Activated B cell treated with CpG ODN at 0.5 μM for 24 hours (primary cell): ENCODE measurements at regions of chr1 and their contacts with region 1.

Region 1: DNA sequence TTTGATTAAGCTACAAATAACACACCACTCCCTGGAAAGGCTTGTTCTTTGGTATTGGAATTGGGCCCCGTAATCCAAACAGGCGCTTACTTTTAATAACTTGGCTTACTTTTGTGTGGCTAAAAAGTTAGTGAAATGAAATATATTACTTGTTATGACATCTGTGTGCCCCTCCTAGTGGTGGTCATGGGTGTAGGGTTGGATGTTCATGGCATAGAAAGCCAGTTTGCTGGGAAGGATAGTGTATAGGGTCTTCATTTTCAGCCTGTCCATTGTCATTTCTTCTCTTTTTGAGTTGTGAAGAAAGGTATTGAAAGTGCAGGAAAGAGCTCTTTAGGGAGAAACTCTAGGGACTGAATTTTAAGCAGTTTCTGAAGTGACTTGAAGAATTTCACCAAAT is 5.9 kb downstream of the CDC14A start:
- DNase-seq: no peak
- ATAC-seq: peak; percentile 38
- H3K4me3 Mint-ChIP-seq: no peak overlapping the region
- H3K27ac Mint-ChIP-seq: peak overlapping the region; percentile 50
- H3K4me1 Mint-ChIP-seq: peaks cover 80% of the 10 kb centered on the region
- H3K27me3 Mint-ChIP-seq: no peaks in the 10 kb centered on the region
- CTCF ChIP-seq: no peak

Region 2: GRCh38 chr1:99808391-99809115 is 549.7 kb before region 1 on chr1:
- CTCF ChIA-PET with region 1: no interaction called
- POLR2A ChIA-PET with region 1: no interaction called
- intact Hi-C with region 1: loop called (anchors 2 kb)
- DNase-seq: no peak
- ATAC-seq: peak; percentile 71
- H3K4me3 Mint-ChIP-seq: no peak overlapping the region
- H3K27ac Mint-ChIP-seq: no peak overlapping the region
- H3K4me1 Mint-ChIP-seq: peaks cover 4% of the 10 kb centered on the region
- H3K27me3 Mint-ChIP-seq: peaks cover 10% of the 10 kb centered on the region
- CTCF ChIP-seq: peak; percentile 52

Region 3: DNA sequence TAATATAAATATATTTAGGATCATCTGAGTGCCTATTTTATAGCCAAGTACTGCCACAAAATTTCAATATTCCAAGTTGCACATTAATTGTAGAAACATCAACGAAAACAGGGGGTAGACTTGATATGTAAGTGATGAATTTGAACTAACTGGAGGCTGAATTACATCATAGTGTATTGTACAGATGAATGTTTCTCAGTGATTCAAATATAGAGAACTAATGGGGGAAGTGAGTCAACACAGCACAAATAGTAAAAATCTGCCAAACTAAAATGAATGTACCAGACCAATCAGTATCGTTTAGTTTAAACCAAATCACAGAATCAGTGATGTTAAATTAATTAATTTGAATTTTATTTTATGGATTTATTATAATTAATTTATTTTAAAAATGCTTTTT is 49.4 kb before region 1 on chr1:
- CTCF ChIA-PET with region 1: no interaction called
- POLR2A ChIA-PET with region 1: no interaction called
- intact Hi-C with region 1: no loop called
- DNase-seq: no peak
- ATAC-seq: no peak
- H3K4me3 Mint-ChIP-seq: no peak overlapping the region
- H3K27ac Mint-ChIP-seq: no peak overlapping the region
- H3K4me1 Mint-ChIP-seq: no peaks in the 10 kb centered on the region
- H3K27me3 Mint-ChIP-seq: no peaks in the 10 kb centered on the region
- CTCF ChIP-seq: no peak